Thyroid gland (tissue), 4 donors: ENCODE measurements at regions of chr9 and their contacts with region 1.

Region 1: GRCh38 chr9:35732122-35732799 is at the starts of genes CREB3 and TLN1:
- DNase-seq: peak; percentile 99
- H3K4me3 ChIP-seq: peak within 1 kb of the TSS; percentile 82 to 90 (median 83)
- H3K27ac ChIP-seq: peak within 1 kb of the TSS; percentile 88 to 96 (median 89)
- H3K4me1 ChIP-seq: peaks cover 50 to 52% of the 10 kb centered on the region in 2 donors
- H3K27me3 ChIP-seq: no peaks in the 10 kb centered on the region
- CTCF ChIP-seq: no peak
- POLR2A ChIP-seq: peak in 1 of 2 donors; percentile 86
- total RNA-seq, gene CREB3: 44.9 to 73.0 (median 51.3) TPM
- total RNA-seq, gene TLN1: 142 to 245 (median 184) TPM

Region 2: GRCh38 chr9:35603987-35604577 is 128.2 kb before region 1 on chr9:
- intact Hi-C with region 1: loop called (anchors 5 kb)
- DNase-seq: peak; percentile 100
- H3K4me3 ChIP-seq: peak overlapping the region; percentile 8 to 91 (median 76)
- H3K27ac ChIP-seq: peak overlapping the region; percentile 81 to 93 (median 87)
- H3K4me1 ChIP-seq: peaks cover 12 to 26% of the 10 kb centered on the region in 2 donors
- H3K27me3 ChIP-seq: no peaks in the 10 kb centered on the region
- CTCF ChIP-seq: peak; percentile 74 to 98 (median 94)
- POLR2A ChIP-seq: peak in 1 of 2 donors; percentile 91